ENCODE measurements at regions of chr9 and their contacts with region 1.

Region 1: GRCh38 chr9:77166193-77166592 is 11.1 kb upstream of the VPS13A start:
- DNase-seq: no peak
- ATAC-seq: no peak
- H3K4me3 Mint-ChIP-seq: no peak overlapping the region
- H3K27ac Mint-ChIP-seq: no peak overlapping the region
- H3K4me1 Mint-ChIP-seq: peaks cover 2% of the 10 kb centered on the region
- H3K27me3 Mint-ChIP-seq: peaks cover 4% of the 10 kb centered on the region

Region 2: DNA sequence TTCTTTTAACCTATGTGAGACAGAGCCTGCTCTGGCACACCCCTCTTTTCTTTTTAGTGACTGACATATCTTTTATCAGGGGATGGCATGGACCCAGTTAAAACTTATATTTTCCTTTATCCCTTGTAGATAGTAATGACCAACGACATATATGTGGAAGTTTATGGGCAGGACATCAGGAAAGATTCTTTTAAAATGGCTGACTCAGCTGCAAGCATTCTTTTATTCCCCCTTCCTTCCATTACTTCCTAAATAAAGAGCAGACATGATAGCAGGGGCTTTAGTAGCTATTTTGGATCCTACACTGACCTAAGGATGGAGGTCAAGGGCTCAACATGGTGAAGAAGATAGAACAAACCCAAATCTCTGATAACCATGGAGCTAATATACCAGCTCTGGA is 13.9 kb before region 1 on chr9:
- CTCF ChIA-PET with region 1: interaction called, 20 read pairs
- POLR2A ChIA-PET with region 1: no interaction called
- DNase-seq: no peak
- ATAC-seq: no peak
- H3K4me3 Mint-ChIP-seq: no peak overlapping the region
- H3K27ac Mint-ChIP-seq: no peak overlapping the region
- H3K4me1 Mint-ChIP-seq: no peaks in the 10 kb centered on the region
- H3K27me3 Mint-ChIP-seq: peaks cover 5% of the 10 kb centered on the region

Region 3: DNA sequence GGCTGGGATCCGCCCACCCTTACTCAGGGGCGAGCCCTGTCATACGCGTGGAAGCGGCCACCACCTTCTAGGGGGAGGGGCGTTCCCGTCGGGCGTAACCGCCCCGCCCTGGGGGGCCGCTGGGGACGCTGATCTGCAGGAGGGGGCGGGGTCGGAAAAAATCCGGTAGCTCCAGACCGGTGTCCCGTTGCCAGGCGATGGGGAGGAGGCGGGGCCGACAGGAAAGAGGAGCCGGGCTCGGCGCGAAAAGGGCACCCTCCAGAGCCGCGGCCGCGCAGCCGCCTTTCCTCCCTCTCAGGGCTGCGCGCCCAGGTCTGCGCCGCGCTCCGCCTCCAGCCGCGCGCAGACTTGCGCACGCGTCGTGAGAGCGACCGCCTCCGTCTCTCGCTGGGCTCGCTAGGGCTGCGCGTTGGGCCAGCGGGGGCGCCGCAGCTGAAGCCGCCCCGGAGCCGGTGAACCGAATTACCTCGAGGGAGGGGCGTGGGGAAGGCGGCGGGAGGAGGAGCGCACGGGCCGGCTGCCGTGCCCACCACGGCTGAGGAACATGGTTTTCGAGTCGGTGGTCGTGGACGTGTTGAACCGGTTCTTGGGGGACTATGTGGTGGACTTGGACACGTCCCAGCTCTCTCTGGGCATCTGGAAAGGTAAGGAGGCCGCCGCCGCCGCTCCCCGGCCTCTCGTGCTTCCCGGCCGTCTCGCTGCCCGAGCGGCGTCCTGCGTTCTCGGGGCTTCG is 11.1 kb after region 1 on chr9 and contains the start of gene VPS13A:
- CTCF ChIA-PET with region 1: interaction called, 28 read pairs
- POLR2A ChIA-PET with region 1: interaction called, 3 read pairs
- DNase-seq: peak; percentile 97
- ATAC-seq: peak; percentile 92
- H3K4me3 Mint-ChIP-seq: peak within 1 kb of the TSS; percentile 97
- H3K27ac Mint-ChIP-seq: peak within 1 kb of the TSS; percentile 89
- H3K4me1 Mint-ChIP-seq: peaks cover 21% of the 10 kb centered on the region
- H3K27me3 Mint-ChIP-seq: peaks cover 8% of the 10 kb centered on the region
- total RNA-seq, gene VPS13A: 39.4 to 40.2 TPM

Region 4: DNA sequence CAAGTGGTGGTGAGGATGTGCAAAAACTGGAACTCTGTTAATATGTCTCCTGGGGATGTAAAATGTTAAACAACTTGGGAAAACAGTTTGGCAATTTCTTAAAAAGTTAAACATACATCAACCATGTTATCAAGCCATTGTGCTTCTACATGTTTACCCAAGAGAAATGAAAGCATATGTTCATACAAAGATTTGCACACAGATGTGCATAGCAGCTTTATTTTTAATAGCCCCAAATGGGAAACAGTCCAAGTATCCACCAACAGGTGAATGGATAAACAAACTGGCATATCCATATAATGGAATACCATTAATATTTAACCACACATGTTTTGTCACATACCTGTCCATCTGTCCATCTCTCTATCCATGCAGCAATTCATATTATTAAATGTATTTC is 17.4 kb after region 1 on chr9:
- CTCF ChIA-PET with region 1: interaction called, 21 read pairs
- POLR2A ChIA-PET with region 1: interaction called, 3 read pairs
- DNase-seq: no peak
- ATAC-seq: no peak
- H3K4me3 Mint-ChIP-seq: no peak overlapping the region
- H3K27ac Mint-ChIP-seq: no peak overlapping the region
- H3K4me1 Mint-ChIP-seq: peaks cover 18% of the 10 kb centered on the region
- H3K27me3 Mint-ChIP-seq: no peaks in the 10 kb centered on the region

Region 5: GRCh38 chr9:77215874-77216273 is 49.7 kb after region 1 on chr9:
- CTCF ChIA-PET with region 1: interaction called, 13 read pairs
- POLR2A ChIA-PET with region 1: no interaction called
- DNase-seq: no peak
- ATAC-seq: no peak
- H3K4me3 Mint-ChIP-seq: no peak overlapping the region
- H3K27ac Mint-ChIP-seq: no peak overlapping the region
- H3K4me1 Mint-ChIP-seq: no peaks in the 10 kb centered on the region
- H3K27me3 Mint-ChIP-seq: no peaks in the 10 kb centered on the region

Region 6: DNA sequence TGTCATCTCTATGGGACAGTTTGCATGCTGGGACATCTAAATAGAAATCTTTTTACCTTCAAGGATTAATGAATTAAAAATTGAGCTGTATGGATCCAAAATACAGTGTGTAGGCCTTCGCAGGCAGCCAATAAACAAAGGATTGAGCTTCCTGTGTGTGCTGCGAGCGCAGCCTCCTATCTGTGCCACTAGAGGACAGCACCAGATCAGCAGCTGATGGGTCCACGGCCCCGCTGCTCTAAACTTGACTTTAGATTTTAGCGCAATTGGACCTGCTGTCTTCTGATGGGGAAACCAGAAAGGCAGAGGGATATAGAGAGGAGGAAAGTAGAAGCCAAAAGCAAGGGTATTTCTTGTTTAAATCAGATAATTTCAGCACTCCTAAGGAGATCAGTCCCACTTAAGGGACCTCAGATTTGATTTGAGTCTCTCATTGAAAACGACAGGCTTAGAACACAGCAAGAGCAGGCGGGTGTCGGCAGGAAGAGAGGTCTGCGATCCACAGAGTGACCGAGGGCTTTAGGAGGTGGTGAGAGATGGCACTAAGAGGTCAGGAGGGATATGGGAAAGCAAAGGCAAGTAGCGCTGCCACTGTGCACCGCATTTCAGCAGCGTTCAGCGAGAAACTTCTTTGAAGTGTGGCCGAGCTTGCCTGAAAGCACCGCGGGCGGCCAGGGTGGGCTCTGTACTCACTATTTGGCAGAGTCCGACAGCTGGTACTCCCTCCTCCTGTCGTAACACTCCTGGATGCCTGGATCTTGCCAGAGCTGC is 267.7 kb after region 1 on chr9:
- CTCF ChIA-PET with region 1: interaction called, 11 read pairs
- POLR2A ChIA-PET with region 1: no interaction called
- DNase-seq: peak; percentile 67
- ATAC-seq: peak; percentile 90
- H3K4me3 Mint-ChIP-seq: no peak overlapping the region
- H3K27ac Mint-ChIP-seq: no peak overlapping the region
- H3K4me1 Mint-ChIP-seq: peaks cover 2% of the 10 kb centered on the region
- H3K27me3 Mint-ChIP-seq: no peaks in the 10 kb centered on the region

Measured in activated CD8-positive, alpha-beta T cell treated with anti-CD3 and anti-CD28 coated beads, Interleukin-2, amount 10 ng/mL, durations not matched to agents 7 days and 5 days (primary cell).